Calu3 (cell line): ENCODE measurements at regions of chr11 and their contacts with region 1.

Region 1: GRCh38 chr11:120400564-120401364 is 64.6 kb downstream of the ARHGEF12 start:
- DNase-seq: peak; percentile 33
- H3K4me3 Mint-ChIP-seq: peak overlapping the region; percentile 39
- H3K27ac Mint-ChIP-seq: peak overlapping the region; percentile 78
- H3K4me1 Mint-ChIP-seq: peaks cover 7% of the 10 kb centered on the region
- H3K27me3 Mint-ChIP-seq: no peaks in the 10 kb centered on the region
- CTCF ChIP-seq: no peak

Region 2: DNA sequence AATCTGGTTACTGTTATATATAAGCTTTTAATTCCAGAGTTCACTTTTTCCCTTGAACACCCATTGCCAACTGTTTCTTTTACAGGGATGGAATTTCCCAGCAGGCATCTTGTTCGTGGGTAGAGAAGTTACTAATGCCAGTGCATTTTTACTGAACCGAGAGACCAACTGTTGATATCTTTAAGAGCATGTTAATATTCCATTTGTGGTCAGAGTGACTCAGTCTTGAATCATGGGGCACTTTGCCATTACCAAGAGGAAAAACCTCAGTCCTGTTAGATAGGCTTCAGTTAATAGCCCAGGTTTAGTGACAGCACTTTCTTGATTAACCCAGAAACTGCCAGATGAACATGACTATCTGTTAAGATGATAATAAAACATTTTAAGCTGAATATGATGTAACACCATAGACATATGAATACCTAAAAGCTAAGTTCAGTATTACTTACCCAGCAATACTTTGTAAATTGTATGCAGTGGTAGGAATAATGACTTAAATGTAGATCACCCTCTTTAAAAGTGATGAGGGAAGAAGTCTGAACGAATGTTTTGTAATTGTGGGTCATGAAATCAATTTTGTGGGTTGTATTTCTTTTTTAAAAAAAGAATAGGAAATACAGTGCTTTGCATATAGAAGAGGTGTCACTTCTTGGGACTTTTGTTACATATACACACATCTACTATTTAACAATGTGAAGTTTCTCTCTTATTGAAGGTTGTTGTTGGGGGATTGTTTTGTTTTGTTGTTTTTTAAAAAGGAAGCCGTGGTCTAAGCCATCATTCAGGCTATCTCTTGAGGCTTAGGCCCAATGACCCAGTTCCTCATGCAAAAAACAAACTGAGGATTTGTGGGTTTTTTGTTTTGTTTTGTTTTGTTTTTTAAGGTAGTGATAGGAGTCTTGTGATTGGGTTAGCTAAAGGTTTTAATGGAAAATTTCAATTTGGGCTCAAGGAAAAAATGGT is 31.6 kb after region 1 on chr11:
- CTCF ChIA-PET with region 1: no interaction called
- intact Hi-C with region 1: loop called (anchors 2 kb)
- DNase-seq: peak; percentile 55
- H3K4me3 Mint-ChIP-seq: peak overlapping the region; percentile 9
- H3K27ac Mint-ChIP-seq: peak overlapping the region; percentile 82
- H3K4me1 Mint-ChIP-seq: peaks cover 23% of the 10 kb centered on the region
- H3K27me3 Mint-ChIP-seq: no peaks in the 10 kb centered on the region
- CTCF ChIP-seq: no peak